Activated CD4-positive, alpha-beta T cell treated with anti-CD3 and anti-CD28 coated beads for 36 hours (primary cell): ENCODE measurements at regions of chr17 and their contacts with region 1.

Region 1: GRCh38 chr17:46044286-46044928 is 45.4 kb downstream of the STH start:
- DNase-seq: peak; percentile 65
- ATAC-seq: no peak
- H3K4me3 Mint-ChIP-seq: no peak overlapping the region
- H3K27ac Mint-ChIP-seq: peak overlapping the region; percentile 11
- H3K4me1 Mint-ChIP-seq: peaks cover 17% of the 10 kb centered on the region
- H3K27me3 Mint-ChIP-seq: no peaks in the 10 kb centered on the region

Region 2: DNA sequence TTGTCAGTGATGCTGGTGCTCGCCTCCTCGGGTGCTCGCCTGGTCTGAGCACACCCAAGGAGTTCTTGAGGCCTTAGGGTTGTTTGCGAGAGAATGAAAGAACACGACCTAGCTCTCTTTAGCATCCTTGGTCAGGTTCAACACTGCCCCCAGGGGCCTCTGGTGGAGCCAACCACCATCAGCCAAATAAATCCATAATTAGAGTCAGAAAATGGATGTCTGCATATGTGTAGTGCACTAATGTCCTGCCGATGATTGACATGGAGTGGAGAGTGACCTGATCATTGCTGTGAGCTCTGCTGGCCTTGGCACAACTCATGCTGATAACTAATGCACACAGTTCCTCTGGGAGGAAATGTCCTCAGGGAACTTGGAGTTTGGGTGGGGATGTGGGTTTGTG is 53.5 kb before region 1 on chr17:
- CTCF ChIA-PET with region 1: no interaction called
- POLR2A ChIA-PET with region 1: no interaction called
- intact Hi-C with region 1: no loop called
- DNase-seq: no peak
- ATAC-seq: no peak
- H3K4me3 Mint-ChIP-seq: no peak overlapping the region
- H3K27ac Mint-ChIP-seq: no peak overlapping the region
- H3K4me1 Mint-ChIP-seq: no peaks in the 10 kb centered on the region
- H3K27me3 Mint-ChIP-seq: no peaks in the 10 kb centered on the region

Region 3: DNA sequence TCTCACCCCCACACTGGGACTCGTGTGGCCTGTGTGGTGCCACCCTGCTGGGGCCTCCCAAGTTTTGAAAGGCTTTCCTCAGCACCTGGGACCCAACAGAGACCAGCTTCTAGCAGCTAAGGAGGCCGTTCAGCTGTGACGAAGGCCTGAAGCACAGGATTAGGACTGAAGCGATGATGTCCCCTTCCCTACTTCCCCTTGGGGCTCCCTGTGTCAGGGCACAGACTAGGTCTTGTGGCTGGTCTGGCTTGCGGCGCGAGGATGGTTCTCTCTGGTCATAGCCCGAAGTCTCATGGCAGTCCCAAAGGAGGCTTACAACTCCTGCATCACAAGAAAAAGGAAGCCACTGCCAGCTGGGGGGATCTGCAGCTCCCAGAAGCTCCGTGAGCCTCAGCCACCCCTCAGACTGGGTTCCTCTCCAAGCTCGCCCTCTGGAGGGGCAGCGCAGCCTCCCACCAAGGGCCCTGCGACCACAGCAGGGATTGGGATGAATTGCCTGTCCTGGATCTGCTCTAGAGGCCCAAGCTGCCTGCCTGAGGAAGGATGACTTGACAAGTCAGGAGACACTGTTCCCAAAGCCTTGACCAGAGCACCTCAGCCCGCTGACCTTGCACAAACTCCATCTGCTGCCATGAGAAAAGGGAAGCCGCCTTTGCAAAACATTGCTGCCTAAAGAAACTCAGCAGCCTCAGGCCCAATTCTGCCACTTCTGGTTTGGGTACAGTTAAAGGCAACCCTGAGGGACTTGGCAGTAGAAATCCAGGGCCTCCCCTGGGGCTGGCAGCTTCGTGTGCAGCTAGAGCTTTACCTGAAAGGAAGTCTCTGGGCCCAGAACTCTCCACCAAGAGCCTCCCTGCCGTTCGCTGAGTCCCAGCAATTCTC is 18.0 kb before region 1 on chr17:
- CTCF ChIA-PET with region 1: interaction called, 10 read pairs
- POLR2A ChIA-PET with region 1: no interaction called
- intact Hi-C with region 1: no loop called
- DNase-seq: no peak
- ATAC-seq: no peak
- H3K4me3 Mint-ChIP-seq: no peak overlapping the region
- H3K27ac Mint-ChIP-seq: no peak overlapping the region
- H3K4me1 Mint-ChIP-seq: peaks cover 4% of the 10 kb centered on the region
- H3K27me3 Mint-ChIP-seq: no peaks in the 10 kb centered on the region

Region 4: DNA sequence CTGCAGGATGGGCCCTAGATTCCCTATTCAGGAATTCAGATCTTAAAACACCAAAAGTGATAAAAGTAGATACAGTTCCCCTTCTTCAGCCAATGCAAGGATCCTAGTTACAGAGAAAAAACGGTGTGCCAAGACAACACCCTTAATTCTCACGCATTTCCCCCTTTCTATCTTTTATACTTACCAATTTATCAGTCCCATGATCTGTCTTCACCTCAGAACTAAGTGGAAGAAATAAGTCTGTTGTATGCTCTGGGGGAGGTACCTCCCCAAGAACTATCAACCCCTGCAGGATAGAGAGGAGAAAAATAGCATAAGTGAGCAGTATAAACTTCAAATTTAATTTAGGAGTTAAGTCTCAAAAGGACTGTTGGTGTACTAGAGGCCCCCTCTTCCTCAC is 37.9 kb after region 1 on chr17:
- CTCF ChIA-PET with region 1: interaction called, 4 read pairs
- POLR2A ChIA-PET with region 1: no interaction called
- intact Hi-C with region 1: loop called in 1 of 2 experiments (anchors 5 kb)
- DNase-seq: no peak
- ATAC-seq: no peak
- H3K4me3 Mint-ChIP-seq: no peak overlapping the region
- H3K27ac Mint-ChIP-seq: peak overlapping the region; percentile 27
- H3K4me1 Mint-ChIP-seq: peaks cover 69% of the 10 kb centered on the region
- H3K27me3 Mint-ChIP-seq: no peaks in the 10 kb centered on the region

Region 5: GRCh38 chr17:46154151-46154816 is 109.9 kb after region 1 on chr17:
- CTCF ChIA-PET with region 1: interaction called, 4 read pairs
- POLR2A ChIA-PET with region 1: interaction called, 11 read pairs
- intact Hi-C with region 1: no loop called
- DNase-seq: peak; percentile 40
- ATAC-seq: peak; percentile 16
- H3K4me3 Mint-ChIP-seq: peak overlapping the region; percentile 46
- H3K27ac Mint-ChIP-seq: peak overlapping the region; percentile 52
- H3K4me1 Mint-ChIP-seq: peaks cover 90% of the 10 kb centered on the region
- H3K27me3 Mint-ChIP-seq: no peaks in the 10 kb centered on the region

Region 6: DNA sequence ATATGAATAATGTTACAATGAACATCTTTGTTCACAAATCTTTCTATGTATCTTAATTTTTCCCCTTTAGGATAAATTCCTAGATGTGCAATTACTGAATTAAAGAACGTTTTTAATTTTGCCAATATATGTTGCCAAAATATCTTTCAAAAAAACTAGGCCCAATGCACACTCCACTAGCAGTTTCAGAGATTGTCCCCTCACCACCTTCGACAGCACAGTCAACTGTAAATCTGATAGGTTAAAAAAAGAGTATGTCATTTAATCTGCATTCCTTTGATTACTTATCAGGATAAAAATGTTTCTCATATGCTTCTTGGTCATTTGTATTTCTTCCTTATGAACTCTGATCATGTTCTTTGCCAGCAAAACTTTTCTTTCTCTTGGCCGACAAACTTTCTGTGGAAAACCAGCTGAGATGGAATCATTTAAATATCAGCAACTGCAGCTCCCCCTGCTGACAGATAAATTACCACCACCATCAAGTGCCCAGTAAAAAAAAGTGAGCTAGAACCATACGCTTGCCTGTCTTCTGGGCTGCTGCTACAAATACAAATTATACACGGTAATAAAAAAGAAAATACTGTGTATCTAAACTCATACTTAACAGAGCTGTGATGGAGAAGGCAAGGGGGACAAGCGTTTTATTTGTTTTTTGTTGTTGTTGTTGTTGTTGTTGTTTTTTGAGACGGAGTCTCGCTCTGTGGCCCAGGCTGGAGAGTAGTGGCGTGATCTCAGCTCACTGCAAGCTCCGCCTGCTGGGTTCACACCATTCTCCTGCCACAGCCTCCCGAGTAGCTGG is 168.4 kb after region 1 on chr17:
- CTCF ChIA-PET with region 1: interaction called, 38 read pairs
- POLR2A ChIA-PET with region 1: no interaction called
- intact Hi-C with region 1: loop called (anchors 1 kb)
- DNase-seq: peak; percentile 61
- ATAC-seq: peak; percentile 66
- H3K4me3 Mint-ChIP-seq: no peak overlapping the region
- H3K27ac Mint-ChIP-seq: no peak overlapping the region
- H3K4me1 Mint-ChIP-seq: peaks cover 23% of the 10 kb centered on the region
- H3K27me3 Mint-ChIP-seq: no peaks in the 10 kb centered on the region